Motor neuron (in vitro differentiated cells): ENCODE measurements at regions of chr11 and their contacts with region 1.

Region 1: DNA sequence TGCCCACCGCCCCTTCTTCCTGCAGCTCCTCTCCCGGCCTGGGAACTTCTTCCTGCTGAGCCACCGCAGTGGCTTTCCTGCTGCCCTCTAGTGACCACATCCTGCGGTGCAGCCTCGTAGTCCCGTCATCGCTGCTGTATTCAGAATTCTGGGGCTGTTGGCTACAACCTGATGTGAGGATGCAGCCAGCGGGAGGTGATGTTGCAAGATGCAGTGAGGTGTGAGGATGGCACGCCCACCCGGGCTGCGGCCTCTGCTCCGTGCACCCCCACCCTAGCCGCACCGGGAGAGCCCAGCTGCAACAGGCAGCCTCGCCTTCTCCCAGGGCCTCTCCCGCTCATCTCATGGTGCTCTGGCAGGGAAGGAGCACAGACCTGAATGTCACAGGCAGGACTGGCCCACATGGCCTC is 10.1 kb downstream of the CHST1 start:
- ATAC-seq: peak; percentile 56 to 90 (median 70)
- H3K4me3 ChIP-seq: no peak overlapping the region
- H3K27ac ChIP-seq: no peak overlapping the region
- H3K4me1 ChIP-seq: peaks cover 21 to 32% of the 10 kb centered on the region in 2 donors

Region 2: GRCh38 chr11:45371251-45372115 is 283.9 kb before region 1 on chr11:
- in situ Hi-C with region 1: loop called in 4 of 9 experiments (anchors 25 kb)
- ATAC-seq: peak; percentile 78 to 97 (median 85)
- H3K4me3 ChIP-seq: peak overlapping the region in 3 of 5 donors; percentile 6 to 8 (median 7)
- H3K27ac ChIP-seq: peak overlapping the region; percentile 40 to 75
- H3K4me1 ChIP-seq: peaks cover 35 to 40% of the 10 kb centered on the region in 2 donors

Region 3: GRCh38 chr11:45383224-45383623 is 272.1 kb before region 1 on chr11:
- in situ Hi-C with region 1: loop called in 1 of 9 experiments (anchors 25 kb)
- ATAC-seq: no peak
- H3K4me3 ChIP-seq: no peak overlapping the region
- H3K27ac ChIP-seq: no peak overlapping the region
- H3K4me1 ChIP-seq: peaks cover 23 to 26% of the 10 kb centered on the region in 2 donors

Region 4: DNA sequence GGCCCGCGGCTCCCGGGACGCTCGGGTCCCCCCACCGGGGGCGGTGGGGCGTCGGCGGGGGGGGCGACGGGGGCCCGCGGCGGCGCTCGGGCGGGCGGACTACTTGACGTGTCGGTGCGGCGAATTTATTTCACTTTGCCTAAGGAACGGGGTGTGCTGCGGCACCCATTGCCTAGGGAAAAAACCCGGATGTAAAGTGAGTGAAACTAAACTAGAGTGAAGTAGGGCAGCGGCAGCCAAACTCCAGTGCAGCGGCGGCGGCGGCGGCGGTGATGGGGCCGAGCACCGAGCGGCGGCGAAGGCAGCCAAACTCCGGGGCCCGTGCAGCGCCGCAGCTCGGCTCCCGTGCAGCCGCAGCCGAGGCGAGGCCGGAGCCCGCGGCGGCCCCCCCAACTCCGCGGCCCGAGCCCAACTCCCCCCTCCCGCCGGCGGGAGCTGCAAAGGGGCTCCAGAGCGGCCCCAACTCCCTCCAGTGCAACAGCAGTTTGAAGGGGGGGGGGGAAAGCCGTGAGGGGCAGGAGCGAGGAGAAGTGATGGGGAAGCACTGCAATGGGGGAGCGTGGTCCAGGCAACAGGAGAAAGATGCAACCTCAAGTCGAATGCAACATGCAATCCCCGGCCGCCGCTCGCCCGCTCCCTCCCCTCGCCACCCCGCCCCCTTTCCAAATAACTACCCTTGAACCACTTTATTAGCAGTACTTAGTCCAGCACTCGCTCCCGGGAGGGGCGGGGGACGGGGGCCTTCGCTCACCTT is 466.5 kb after region 1 on chr11:
- in situ Hi-C with region 1: no loop called
- ATAC-seq: peak; percentile 47 to 68 (median 60)
- H3K4me3 ChIP-seq: peak overlapping the region; percentile 59 to 69 (median 63)
- H3K27ac ChIP-seq: peak overlapping the region; percentile 95
- H3K4me1 ChIP-seq: peaks cover 0 to 16% of the 10 kb centered on the region in 2 donors